ENCODE measurements at regions of chr1 and their contacts with region 1.

Region 1: DNA sequence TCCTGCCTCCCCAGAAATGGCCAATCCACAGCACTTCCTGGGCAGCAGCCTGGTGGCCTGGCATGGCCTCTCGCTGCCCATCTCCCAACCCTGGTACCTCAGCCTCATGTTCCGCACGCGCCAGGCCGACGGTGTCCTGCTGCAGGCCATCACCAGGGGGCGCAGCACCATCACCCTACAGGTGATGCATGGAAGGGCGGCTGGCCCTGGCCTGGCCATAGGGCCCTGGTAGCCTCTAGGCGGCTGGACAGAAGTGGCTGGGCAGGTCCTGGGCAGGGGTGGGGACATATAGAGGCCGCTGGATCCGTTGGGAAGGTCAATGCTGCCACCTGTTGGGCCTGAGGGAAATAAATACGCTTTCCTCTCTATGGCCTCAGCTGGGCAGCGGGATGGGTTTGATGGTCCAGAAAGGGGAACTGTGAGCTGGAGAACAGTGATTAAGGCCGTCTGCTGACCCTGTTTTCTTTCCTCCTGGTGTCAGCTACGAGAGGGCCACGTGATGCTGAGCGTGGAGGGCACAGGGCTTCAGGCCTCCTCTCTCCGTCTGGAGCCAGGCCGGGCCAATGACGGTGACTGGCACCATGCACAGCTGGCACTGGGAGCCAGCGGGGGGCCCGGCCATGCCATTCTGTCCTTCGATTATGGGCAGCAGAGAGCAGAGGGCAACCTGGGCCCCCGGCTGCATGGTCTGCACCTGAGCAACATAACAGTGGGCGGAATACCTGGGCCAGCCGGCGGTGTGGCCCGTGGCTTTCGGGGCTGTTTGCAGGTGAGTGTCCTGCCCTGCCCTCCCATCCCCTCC is 14.5 kb downstream of the CELSR2 start:
- DNase-seq: peak; percentile 52 to 76
- ATAC-seq: peak; percentile 59 to 78
- H3K4me3 ChIP-seq: no peak overlapping the region
- H3K27ac ChIP-seq: no peak overlapping the region
- H3K4me1 ChIP-seq: no peaks in the 10 kb centered on the region
- H3K27me3 ChIP-seq: no peaks in the 10 kb centered on the region
- CTCF ChIP-seq: peak; percentile 87 to 98 (median 93)
- POLR2A ChIP-seq: no peak

Region 2: DNA sequence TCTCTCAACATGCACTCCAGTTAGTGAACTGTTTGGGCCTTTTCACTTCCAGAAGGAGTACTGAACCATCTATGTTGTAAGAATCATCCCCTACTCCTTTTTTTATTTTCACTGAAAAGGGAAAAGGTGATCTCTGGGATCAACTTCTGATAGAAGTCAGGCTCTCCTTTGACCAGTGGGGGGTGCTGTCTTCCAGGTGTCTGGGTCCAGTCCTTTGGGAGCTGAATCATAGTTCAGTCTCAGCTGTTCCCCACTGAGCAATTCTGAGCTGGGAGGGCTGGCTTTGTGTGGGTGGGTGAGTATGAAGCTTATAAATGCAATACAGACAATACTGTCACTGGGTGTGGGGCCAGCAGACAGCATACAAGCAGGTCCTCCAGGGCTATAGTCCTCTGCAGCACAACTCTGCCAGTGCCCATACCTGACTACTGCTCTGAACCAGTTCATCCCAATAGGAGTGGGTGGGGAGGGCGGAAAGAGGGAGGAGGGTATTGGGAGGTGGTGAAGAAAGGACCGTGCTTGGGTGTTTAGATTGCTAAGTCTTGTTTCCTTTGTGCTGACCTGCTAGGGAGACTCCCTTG is 62.6 kb before region 1 on chr1:
- in situ Hi-C with region 1: no loop called
- intact Hi-C with region 1: loop called (anchors 1 kb)
- DNase-seq: peak in 1 of 2 donors; percentile 25
- ATAC-seq: peak in 1 of 2 donors; percentile 60
- H3K4me3 ChIP-seq: no peak overlapping the region
- H3K27ac ChIP-seq: no peak overlapping the region
- H3K4me1 ChIP-seq: no peaks in the 10 kb centered on the region
- H3K27me3 ChIP-seq: no peaks in the 10 kb centered on the region
- CTCF ChIP-seq: peak in 3 of 5 experiments; percentile 33 to 37 (median 34)
- POLR2A ChIP-seq: no peak

Region 3: DNA sequence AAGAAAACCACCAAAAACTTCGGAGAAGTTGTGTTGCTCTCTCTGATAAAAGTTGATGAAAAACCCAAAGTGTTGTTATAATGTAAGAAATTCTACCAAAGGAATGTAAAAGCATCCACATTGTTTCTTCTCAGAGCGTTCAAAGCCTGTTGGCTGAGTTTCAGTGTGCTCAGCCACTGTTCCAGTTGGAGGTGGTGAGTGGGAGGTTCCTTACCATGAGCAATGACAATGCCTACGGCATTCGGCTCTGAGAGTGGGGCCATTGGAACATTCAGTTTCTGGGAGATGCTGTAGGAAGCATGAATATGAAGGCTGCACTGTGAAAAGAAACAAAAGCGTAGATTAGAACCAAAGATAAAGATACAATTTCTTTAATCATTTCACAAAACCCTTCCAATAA is 63.5 kb after region 1 on chr1:
- in situ Hi-C with region 1: no loop called
- intact Hi-C with region 1: no loop called
- DNase-seq: no peak
- ATAC-seq: no peak
- H3K4me3 ChIP-seq: no peak overlapping the region
- H3K27ac ChIP-seq: no peak overlapping the region
- H3K4me1 ChIP-seq: no peaks in the 10 kb centered on the region
- H3K27me3 ChIP-seq: no peaks in the 10 kb centered on the region
- CTCF ChIP-seq: no peak
- POLR2A ChIP-seq: no peak